ENCODE measurements at regions of chr20 and their contacts with region 1.

Region 1: GRCh38 chr20:50992733-50993457 is 30.0 kb downstream of the KCNG1 start:
- DNase-seq: peak; percentile 74
- ATAC-seq: peak; percentile 91
- H3K4me3 Mint-ChIP-seq: peak overlapping the region; percentile 52
- H3K27ac Mint-ChIP-seq: peak overlapping the region; percentile 98
- H3K4me1 Mint-ChIP-seq: peaks cover 40% of the 10 kb centered on the region
- H3K27me3 Mint-ChIP-seq: peaks cover 5% of the 10 kb centered on the region
- CTCF ChIP-seq: peak; percentile 89

Region 2: GRCh38 chr20:51003753-51004152 is 10.9 kb after region 1 on chr20:
- CTCF ChIA-PET with region 1: interaction called, 11 read pairs
- POLR2A ChIA-PET with region 1: no interaction called
- DNase-seq: no peak
- ATAC-seq: no peak
- H3K4me3 Mint-ChIP-seq: no peak overlapping the region
- H3K27ac Mint-ChIP-seq: no peak overlapping the region
- H3K4me1 Mint-ChIP-seq: no peaks in the 10 kb centered on the region
- H3K27me3 Mint-ChIP-seq: no peaks in the 10 kb centered on the region
- CTCF ChIP-seq: no peak

Region 3: GRCh38 chr20:51022803-51023630 is 30.1 kb after region 1 on chr20 and contains the start of gene KCNG1:
- CTCF ChIA-PET with region 1: interaction called, 28 read pairs
- POLR2A ChIA-PET with region 1: no interaction called
- DNase-seq: peak; percentile 79
- ATAC-seq: peak; percentile 82
- H3K4me3 Mint-ChIP-seq: peak within 1 kb of the TSS; percentile 72
- H3K27ac Mint-ChIP-seq: no peak within 1 kb of the TSS
- H3K4me1 Mint-ChIP-seq: peaks cover 36% of the 10 kb centered on the region
- H3K27me3 Mint-ChIP-seq: peaks cover 49% of the 10 kb centered on the region
- CTCF ChIP-seq: no peak
- total RNA-seq, gene KCNG1: 31.2 to 34.6 TPM (median 31.6 TPM) in 3 replicates

Region 4: DNA sequence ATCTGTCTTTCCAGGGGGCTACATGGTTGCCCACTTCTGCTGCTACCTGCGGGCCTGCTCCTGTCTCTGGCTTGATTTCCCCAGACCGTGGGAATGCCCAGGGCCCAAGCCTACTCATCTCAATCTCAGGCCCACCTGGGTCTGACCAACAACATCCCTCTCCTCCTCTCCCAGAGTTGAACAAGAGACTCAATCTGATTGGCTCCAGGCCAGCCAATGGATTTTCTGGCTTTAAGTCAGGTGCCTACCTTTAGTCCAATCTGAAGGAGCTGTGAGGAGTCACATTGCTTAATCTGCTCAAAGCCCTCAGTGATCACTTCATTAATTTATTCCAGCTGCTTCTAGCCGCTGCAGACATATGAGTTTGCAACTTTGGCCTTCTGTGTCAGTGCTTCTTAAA is 192.4 kb after region 1 on chr20:
- CTCF ChIA-PET with region 1: no interaction called
- POLR2A ChIA-PET with region 1: no interaction called
- DNase-seq: no peak
- ATAC-seq: no peak
- H3K4me3 Mint-ChIP-seq: no peak overlapping the region
- H3K27ac Mint-ChIP-seq: no peak overlapping the region
- H3K4me1 Mint-ChIP-seq: peaks cover 4% of the 10 kb centered on the region
- H3K27me3 Mint-ChIP-seq: no peaks in the 10 kb centered on the region
- CTCF ChIP-seq: no peak

Region 5: DNA sequence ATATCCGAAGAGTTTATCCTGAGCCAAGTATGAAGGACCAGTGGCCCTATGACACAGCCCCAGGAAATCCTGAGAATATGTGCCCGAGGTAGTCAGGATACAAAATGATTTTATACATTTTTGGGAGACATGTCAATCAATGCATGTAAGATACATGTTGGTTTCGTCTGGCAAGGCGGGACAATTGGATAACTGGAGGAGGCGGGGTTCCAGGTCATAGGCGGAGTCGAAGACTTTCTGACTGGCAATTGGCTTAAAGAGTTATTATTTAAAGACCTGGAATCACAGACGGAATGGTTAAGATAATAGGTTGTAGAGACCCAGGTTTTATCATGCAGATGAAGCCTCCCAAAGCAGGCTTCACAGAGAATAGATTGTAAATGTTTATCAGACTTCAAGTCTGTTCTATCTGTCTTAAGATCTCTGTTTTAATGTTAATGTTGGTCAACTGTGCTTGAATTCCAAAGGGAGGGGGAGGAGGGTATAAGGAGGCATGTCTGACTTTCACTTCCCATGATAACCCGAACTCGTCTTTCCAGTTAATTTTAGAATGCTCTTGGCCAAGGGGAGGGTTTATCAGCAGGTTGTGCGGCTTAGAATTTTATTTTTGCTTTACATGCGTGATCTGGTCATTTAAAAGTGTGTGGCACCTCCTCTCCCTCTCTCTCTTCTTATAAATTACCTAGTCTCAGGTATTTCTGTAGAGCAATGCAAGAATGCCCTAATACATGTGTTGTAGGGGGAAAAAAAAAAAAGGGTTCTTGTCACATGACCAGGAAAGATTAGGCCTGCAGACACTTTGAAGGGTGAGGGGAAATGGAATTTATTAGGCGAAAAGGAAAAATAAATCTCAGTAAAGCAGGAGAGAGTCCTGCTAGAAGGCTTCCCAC is 319.0 kb after region 1 on chr20:
- CTCF ChIA-PET with region 1: interaction called, 246 read pairs
- POLR2A ChIA-PET with region 1: interaction called, 3 read pairs
- DNase-seq: peak; percentile 49
- ATAC-seq: peak; percentile 84
- H3K4me3 Mint-ChIP-seq: peak overlapping the region; percentile 48
- H3K27ac Mint-ChIP-seq: peak overlapping the region; percentile 80
- H3K4me1 Mint-ChIP-seq: peaks cover 51% of the 10 kb centered on the region
- H3K27me3 Mint-ChIP-seq: peaks cover 66% of the 10 kb centered on the region
- CTCF ChIP-seq: no peak

Region 6: DNA sequence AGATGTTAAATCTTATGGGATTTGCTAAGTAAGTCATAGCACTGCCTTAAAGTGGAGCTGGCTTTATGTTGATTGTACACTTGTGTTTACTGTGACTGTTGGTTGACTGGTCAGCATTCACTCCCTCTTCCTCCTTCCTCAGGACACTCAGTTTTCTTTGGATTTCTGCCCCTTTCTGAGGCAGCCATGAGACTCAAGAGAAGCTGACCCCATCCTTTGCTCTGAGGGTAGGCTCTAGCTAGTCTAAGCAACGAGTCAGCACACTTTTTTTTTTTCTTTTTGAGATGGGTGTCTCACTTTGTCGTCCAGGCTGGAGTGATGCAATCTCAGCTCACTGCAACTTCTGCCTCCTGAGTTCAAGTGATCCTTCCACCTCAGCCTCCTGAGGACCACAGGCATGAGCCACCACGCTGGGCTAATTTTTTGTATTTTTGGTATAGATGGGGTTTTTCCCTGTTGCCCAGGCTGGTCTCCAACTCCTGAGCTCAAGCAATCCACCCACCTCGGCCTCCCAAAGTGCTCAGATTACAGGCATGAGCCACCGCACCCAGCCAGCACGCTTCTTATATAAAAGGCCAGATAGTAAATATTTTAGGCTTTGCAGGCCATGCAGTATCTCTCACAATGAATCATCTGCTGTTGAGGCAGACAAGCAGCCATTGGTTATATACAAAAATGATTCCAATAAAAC is 358.2 kb after region 1 on chr20:
- CTCF ChIA-PET with region 1: interaction called, 13 read pairs
- POLR2A ChIA-PET with region 1: interaction called, 8 read pairs
- DNase-seq: no peak
- ATAC-seq: no peak
- H3K4me3 Mint-ChIP-seq: no peak overlapping the region
- H3K27ac Mint-ChIP-seq: no peak overlapping the region
- H3K4me1 Mint-ChIP-seq: no peaks in the 10 kb centered on the region
- H3K27me3 Mint-ChIP-seq: peaks cover 10% of the 10 kb centered on the region
- CTCF ChIP-seq: no peak